Spleen (tissue), 13 donors: ENCODE measurements at regions of chr1 and their contacts with region 1.

Region 1: GRCh38 chr1:35930593-35931445 is at the start of gene AGO3:
- DNase-seq: peak; percentile 98
- H3K4me3 ChIP-seq: peak within 1 kb of the TSS; percentile 66 to 87 (median 82)
- H3K27ac ChIP-seq: peak within 1 kb of the TSS; percentile 95 to 99 (median 98)
- H3K4me1 ChIP-seq: peaks cover 16 to 57% (median 41%) of the 10 kb centered on the region in 6 donors
- H3K27me3 ChIP-seq: no peaks in the 10 kb centered on the region
- CTCF ChIP-seq: no peak
- POLR2A ChIP-seq: peak in 2 of 3 donors; percentile 50 to 60
- total RNA-seq, gene AGO3: 18.6 to 41.1 (median 31.7) TPM

Region 2: GRCh38 chr1:35763201-35763600 is 167.6 kb before region 1 on chr1:
- intact Hi-C with region 1: no loop called
- DNase-seq: no peak
- H3K4me3 ChIP-seq: no peak overlapping the region
- H3K27ac ChIP-seq: no peak overlapping the region
- H3K4me1 ChIP-seq: peaks cover 0 to 2% (median 0%) of the 10 kb centered on the region in 6 donors
- H3K27me3 ChIP-seq: no peaks in the 10 kb centered on the region
- CTCF ChIP-seq: no peak
- POLR2A ChIP-seq: no peak

Region 3: DNA sequence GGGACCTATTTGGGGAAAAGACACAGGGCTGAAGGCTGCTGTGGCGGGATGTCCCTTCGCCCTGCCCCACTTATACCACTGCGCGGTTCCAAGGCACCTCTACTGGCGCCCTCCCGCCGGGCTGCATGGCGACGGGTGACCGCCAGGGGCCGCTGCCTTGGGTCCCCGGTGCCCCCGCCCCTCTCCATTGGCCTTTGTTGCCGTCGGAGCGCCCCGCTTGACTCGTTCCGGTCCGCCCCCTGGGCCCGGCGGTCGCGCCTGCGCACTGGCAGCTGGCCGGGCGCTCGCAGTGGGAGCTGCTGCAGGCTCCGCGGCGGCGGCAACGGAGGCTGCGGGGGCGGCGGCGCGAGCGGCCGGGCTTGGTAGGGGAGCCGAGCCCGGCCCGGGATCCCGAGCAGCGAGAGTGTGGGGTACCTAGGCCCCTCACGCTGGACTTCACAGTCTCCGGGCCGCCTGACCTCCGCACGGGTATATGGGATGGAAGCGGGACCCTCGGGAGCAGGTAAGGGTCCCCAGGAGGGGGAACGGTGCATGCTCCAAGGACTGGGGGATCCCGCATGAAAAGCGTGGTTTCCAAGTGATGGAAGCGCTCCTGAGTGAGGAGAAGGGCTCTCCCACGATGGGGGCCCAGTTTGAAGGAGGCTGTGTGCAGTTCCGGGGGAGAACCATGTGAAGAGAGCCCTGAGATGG is 47.7 kb before region 1 on chr1 and contains the start of gene AGO1:
- intact Hi-C with region 1: loop called (anchors 10 kb)
- DNase-seq: peak; percentile 99
- H3K4me3 ChIP-seq: peak within 1 kb of the TSS; percentile 80 to 100 (median 96)
- H3K27ac ChIP-seq: peak within 1 kb of the TSS; percentile 79 to 91 (median 88)
- H3K4me1 ChIP-seq: peaks cover 19 to 55% (median 52%) of the 10 kb centered on the region in 6 donors
- H3K27me3 ChIP-seq: no peaks in the 10 kb centered on the region
- CTCF ChIP-seq: peak; percentile 94 to 100 (median 99)
- POLR2A ChIP-seq: peak in 1 of 3 donors; percentile 86
- total RNA-seq, gene AGO1: 27.4 to 38.2 (median 32.4) TPM